ENCODE measurements at regions of chrX and their contacts with region 1.

Region 1: DNA sequence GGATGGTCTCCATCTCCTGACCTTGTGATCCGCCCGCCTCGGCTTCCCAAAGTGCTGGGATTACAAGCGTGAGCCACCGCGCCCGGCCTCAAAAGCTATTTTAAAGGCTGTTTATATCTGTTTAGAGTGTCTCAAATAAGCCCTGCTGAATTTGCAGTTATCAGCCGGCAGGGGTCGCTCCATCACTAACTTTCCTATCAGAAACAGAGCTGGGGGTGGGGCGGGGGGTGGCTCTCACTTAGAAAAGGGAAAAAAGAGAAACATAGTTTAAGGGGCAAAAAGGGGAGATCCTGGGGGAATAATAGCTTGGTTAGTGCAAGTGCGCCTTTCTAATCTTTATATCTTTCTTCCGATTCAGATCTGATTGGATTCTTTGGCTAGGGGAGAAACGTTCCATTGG is 450.7 kb downstream of the UBE2NL start:
- DNase-seq: no peak
- H3K4me3 ChIP-seq: no peak overlapping the region
- H3K27ac ChIP-seq: no peak overlapping the region
- H3K4me1 ChIP-seq: no peaks in the 10 kb centered on the region
- H3K27me3 ChIP-seq: no peaks in the 10 kb centered on the region
- CTCF ChIP-seq: peak; percentile 67

Region 2: DNA sequence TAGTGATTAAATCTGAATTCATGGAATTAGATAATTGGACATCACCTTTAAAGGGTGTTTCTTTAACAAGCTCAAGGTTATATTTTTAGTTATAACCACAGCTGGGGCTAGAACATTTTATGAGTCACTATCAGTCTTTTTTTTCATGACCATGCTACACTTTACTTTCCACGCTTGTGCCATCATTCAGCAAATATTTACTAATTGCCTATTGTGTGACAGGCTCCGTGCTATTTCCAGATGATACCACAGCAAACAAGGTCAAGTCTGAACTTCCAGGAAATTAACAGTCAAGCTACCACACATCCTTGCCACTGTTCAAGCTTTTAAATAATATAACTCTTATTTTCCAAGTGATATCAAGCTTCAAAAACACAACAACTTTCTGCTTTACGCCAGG is 833.8 kb before region 1 on chrX:
- CTCF ChIA-PET with region 1: no interaction called
- POLR2A ChIA-PET with region 1: no interaction called
- intact Hi-C with region 1: no loop called
- DNase-seq: no peak
- H3K4me3 ChIP-seq: no peak overlapping the region
- H3K27ac ChIP-seq: no peak overlapping the region
- H3K4me1 ChIP-seq: no peaks in the 10 kb centered on the region
- H3K27me3 ChIP-seq: no peaks in the 10 kb centered on the region
- CTCF ChIP-seq: no peak

Region 3: DNA sequence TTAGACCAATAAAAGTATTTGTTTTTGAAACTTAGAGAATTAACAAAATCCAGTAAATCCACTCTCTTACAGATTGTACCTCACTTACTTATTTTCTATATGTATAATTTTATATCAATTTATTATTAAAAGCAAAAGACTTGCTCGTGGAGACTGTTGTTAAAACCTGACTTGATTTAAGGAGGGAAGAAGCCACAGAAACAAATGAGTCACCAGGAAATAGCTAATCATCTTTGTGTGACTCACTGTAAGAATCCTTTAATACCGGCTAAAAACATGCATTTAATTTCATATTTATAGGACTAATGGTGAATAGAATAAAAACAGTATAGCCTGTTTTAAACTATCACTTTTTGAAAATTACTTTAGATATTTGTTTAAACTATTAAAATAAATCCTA is 480.6 kb before region 1 on chrX:
- CTCF ChIA-PET with region 1: no interaction called
- POLR2A ChIA-PET with region 1: no interaction called
- intact Hi-C with region 1: no loop called
- DNase-seq: peak in 1 of 2 experiments; percentile 48
- H3K4me3 ChIP-seq: no peak overlapping the region
- H3K27ac ChIP-seq: no peak overlapping the region
- H3K4me1 ChIP-seq: no peaks in the 10 kb centered on the region
- H3K27me3 ChIP-seq: no peaks in the 10 kb centered on the region
- CTCF ChIP-seq: no peak

Region 4: GRCh38 chrX:144253356-144253755 is 81.2 kb before region 1 on chrX:
- CTCF ChIA-PET with region 1: no interaction called
- POLR2A ChIA-PET with region 1: no interaction called
- intact Hi-C with region 1: no loop called
- DNase-seq: no peak
- H3K4me3 ChIP-seq: no peak overlapping the region
- H3K27ac ChIP-seq: no peak overlapping the region
- H3K4me1 ChIP-seq: no peaks in the 10 kb centered on the region
- H3K27me3 ChIP-seq: no peaks in the 10 kb centered on the region
- CTCF ChIP-seq: no peak

Region 5: DNA sequence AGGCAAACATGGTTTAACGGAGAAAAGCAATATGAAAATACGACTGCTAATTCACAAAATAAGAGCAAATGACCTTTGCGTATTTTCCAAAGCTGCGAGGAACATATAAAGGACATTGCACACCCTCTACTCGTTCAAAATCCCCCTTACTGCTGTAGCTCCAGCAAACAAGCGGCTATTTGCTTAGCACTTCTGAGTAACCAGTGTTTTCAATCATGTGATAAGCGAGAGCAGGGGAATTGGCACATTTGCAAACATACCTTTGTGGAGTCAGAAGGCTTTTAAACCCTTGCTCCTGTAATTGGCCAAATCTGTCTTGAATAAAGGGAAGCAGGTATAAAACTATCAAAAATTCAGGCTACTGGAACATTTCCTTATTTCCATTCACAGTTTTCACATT is 159.5 kb after region 1 on chrX:
- CTCF ChIA-PET with region 1: no interaction called
- POLR2A ChIA-PET with region 1: no interaction called
- intact Hi-C with region 1: no loop called
- DNase-seq: no peak
- H3K4me3 ChIP-seq: no peak overlapping the region
- H3K27ac ChIP-seq: no peak overlapping the region
- H3K4me1 ChIP-seq: no peaks in the 10 kb centered on the region
- H3K27me3 ChIP-seq: no peaks in the 10 kb centered on the region
- CTCF ChIP-seq: no peak

Region 6: GRCh38 chrX:144901521-144901920 is 566.9 kb after region 1 on chrX:
- CTCF ChIA-PET with region 1: no interaction called
- POLR2A ChIA-PET with region 1: no interaction called
- intact Hi-C with region 1: loop called (anchors 10 kb)
- DNase-seq: no peak
- H3K4me3 ChIP-seq: no peak overlapping the region
- H3K27ac ChIP-seq: no peak overlapping the region
- H3K4me1 ChIP-seq: no peaks in the 10 kb centered on the region
- H3K27me3 ChIP-seq: no peaks in the 10 kb centered on the region
- CTCF ChIP-seq: no peak

Measured in PC-9 (cell line).